Activated CD4-positive, alpha-beta T cell treated with anti-CD3 and anti-CD28 coated beads for 36 hours (primary cell): ENCODE measurements at regions of chr5 and their contacts with region 1.

Region 1: DNA sequence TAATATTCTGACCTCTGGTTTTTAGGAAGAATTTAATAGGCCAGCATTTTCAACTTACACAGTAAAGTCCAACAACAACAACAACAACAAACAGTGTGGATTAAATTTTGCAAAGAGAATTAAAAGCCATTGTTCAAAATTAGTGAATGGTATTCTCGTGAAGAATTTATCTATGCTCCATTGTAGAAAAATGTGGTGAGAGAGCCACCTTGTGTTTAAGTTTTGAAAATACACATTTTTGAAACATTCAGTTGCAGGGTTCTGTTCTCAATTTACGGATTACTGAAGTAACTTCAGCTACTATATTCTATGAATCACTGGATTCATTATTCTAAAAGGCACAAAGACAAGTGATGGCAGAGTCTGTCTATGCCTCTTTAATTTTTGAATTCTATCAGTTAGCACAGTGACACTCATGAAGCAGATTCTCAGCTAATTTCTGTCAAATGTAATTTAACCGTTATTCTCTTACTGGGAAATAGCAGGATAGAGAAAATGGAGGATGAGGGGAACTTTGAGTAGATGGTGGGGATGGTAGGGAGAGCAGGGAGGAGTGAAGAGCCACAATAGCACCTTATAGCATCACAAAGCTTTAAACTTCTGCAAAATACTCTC is 11.0 kb downstream of the CCDC152 start:
- DNase-seq: no peak
- ATAC-seq: no peak
- H3K4me3 Mint-ChIP-seq: no peak overlapping the region
- H3K27ac Mint-ChIP-seq: no peak overlapping the region
- H3K4me1 Mint-ChIP-seq: no peaks in the 10 kb centered on the region
- H3K27me3 Mint-ChIP-seq: peaks cover 3% of the 10 kb centered on the region

Region 2: DNA sequence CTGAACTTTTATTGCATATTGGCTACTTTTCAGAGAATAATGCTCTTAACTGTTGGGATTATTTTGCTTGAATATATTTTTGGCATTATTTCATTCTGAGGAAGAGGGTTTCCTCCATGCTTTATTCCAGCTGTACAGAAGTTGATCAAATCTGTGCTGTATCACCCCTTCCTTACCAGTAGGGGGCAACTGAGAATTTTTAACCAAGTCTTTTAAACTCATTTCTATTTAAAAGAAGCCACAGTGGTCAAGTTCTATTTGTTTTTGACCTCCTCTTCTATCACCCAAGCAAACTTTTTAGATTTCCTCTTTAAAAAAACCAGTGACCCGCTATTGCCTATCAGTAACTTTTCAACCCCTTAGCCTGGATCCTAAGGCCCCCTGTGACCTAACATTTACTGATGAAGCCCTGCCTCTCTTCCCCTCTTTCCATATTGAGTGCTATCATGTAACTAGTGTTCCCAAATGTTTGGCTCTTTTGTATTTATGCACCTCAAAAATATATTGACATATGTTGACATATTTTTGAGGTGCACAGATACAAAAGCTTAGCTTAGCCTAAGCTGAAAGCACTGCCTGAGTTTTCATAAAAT is 761.9 kb before region 1 on chr5:
- CTCF ChIA-PET with region 1: interaction called, 4 read pairs
- POLR2A ChIA-PET with region 1: no interaction called
- intact Hi-C with region 1: loop called in 1 of 2 experiments (anchors 2 kb)
- DNase-seq: no peak
- ATAC-seq: no peak
- H3K4me3 Mint-ChIP-seq: no peak overlapping the region
- H3K27ac Mint-ChIP-seq: no peak overlapping the region
- H3K4me1 Mint-ChIP-seq: no peaks in the 10 kb centered on the region
- H3K27me3 Mint-ChIP-seq: peaks cover 3% of the 10 kb centered on the region

Region 3: DNA sequence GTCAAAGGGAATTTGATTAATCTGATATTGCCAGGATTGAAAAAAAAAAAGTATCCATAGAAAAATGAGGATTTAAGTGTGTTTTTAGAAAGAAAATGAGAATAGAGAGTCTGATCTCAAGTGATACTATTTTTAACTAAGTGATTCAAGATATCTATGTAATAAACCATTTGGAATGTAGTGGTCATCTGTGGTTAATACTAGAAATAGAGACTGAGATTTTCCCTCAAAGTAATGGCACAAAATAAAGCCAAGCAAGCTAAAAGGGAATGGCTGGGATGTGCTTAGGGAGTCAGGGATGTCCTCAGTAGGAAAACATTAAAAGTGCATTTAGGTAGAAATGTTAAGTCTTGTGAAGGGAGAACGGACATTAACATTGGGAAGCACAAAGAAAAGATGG is 751.9 kb before region 1 on chr5:
- CTCF ChIA-PET with region 1: no interaction called
- POLR2A ChIA-PET with region 1: no interaction called
- intact Hi-C with region 1: no loop called
- DNase-seq: no peak
- ATAC-seq: no peak
- H3K4me3 Mint-ChIP-seq: no peak overlapping the region
- H3K27ac Mint-ChIP-seq: no peak overlapping the region
- H3K4me1 Mint-ChIP-seq: no peaks in the 10 kb centered on the region
- H3K27me3 Mint-ChIP-seq: peaks cover 10% of the 10 kb centered on the region

Region 4: GRCh38 chr5:42423285-42424165 is 344.1 kb before region 1 on chr5 and contains the start of gene GHR:
- CTCF ChIA-PET with region 1: interaction called, 3 read pairs
- POLR2A ChIA-PET with region 1: no interaction called
- intact Hi-C with region 1: loop called in 1 of 2 experiments (anchors 1 kb)
- DNase-seq: peak; percentile 54
- ATAC-seq: peak; percentile 73
- H3K4me3 Mint-ChIP-seq: no peak within 1 kb of the TSS
- H3K27ac Mint-ChIP-seq: no peak within 1 kb of the TSS
- H3K4me1 Mint-ChIP-seq: no peaks in the 10 kb centered on the region
- H3K27me3 Mint-ChIP-seq: peaks cover 24% of the 10 kb centered on the region
- total RNA-seq, gene GHR: not detected

Region 5: GRCh38 chr5:42514754-42515153 is 252.8 kb before region 1 on chr5:
- CTCF ChIA-PET with region 1: no interaction called
- POLR2A ChIA-PET with region 1: no interaction called
- intact Hi-C with region 1: loop called in 1 of 2 experiments (anchors 5 kb)
- DNase-seq: no peak
- ATAC-seq: no peak
- H3K4me3 Mint-ChIP-seq: no peak overlapping the region
- H3K27ac Mint-ChIP-seq: no peak overlapping the region
- H3K4me1 Mint-ChIP-seq: no peaks in the 10 kb centered on the region
- H3K27me3 Mint-ChIP-seq: peaks cover 2% of the 10 kb centered on the region

Region 6: DNA sequence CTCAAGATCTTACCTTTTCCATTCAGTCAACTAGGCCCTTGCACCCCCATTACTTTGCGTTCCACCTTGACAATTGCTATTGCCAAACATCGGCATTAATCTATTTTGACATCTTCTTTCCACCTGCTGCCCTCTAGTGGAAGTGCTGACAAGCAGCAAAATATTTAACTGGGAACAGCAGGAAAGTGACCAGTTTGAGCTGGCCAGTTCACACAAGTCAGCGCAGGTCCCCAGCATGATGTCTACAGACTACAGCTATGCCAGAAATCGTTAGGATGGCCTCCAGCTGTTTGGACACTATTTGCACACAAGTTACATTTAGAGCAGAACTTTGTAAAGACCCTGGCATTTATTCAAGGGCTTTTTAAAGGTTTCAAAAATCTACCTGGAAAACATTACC is 184.3 kb before region 1 on chr5:
- CTCF ChIA-PET with region 1: interaction called, 6 read pairs
- POLR2A ChIA-PET with region 1: no interaction called
- intact Hi-C with region 1: loop called in 1 of 2 experiments (anchors 5 kb)
- DNase-seq: peak; percentile 52
- ATAC-seq: no peak
- H3K4me3 Mint-ChIP-seq: no peak overlapping the region
- H3K27ac Mint-ChIP-seq: no peak overlapping the region
- H3K4me1 Mint-ChIP-seq: no peaks in the 10 kb centered on the region
- H3K27me3 Mint-ChIP-seq: peaks cover 10% of the 10 kb centered on the region

Region 7: DNA sequence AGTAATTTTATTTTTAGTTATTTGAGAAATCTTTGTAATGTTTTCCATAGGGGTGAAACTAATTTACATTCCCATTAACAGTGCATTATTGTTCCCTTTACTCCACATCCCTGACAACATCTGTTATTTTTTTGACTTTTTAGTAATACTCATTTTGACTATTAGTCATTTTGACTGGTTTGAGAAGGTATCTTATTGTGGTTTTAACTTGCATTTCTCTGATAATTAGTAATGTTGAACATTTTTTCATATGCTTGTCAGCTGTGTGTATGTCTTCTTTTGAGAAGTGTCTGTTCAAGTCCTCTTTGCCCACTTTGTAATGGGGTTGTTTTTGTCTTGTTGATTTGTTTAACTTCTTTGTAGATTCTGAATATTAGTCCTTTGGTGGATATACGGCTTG is 16.5 kb after region 1 on chr5:
- CTCF ChIA-PET with region 1: no interaction called
- POLR2A ChIA-PET with region 1: no interaction called
- intact Hi-C with region 1: no loop called
- DNase-seq: no peak
- ATAC-seq: no peak
- H3K4me3 Mint-ChIP-seq: no peak overlapping the region
- H3K27ac Mint-ChIP-seq: no peak overlapping the region
- H3K4me1 Mint-ChIP-seq: no peaks in the 10 kb centered on the region
- H3K27me3 Mint-ChIP-seq: no peaks in the 10 kb centered on the region

Region 8: GRCh38 chr5:42889311-42889933 is 121.8 kb after region 1 on chr5:
- CTCF ChIA-PET with region 1: interaction called, 6 read pairs
- POLR2A ChIA-PET with region 1: no interaction called
- intact Hi-C with region 1: loop called (anchors 5 to 10 kb)
- DNase-seq: peak; percentile 82
- ATAC-seq: peak; percentile 84
- H3K4me3 Mint-ChIP-seq: no peak overlapping the region
- H3K27ac Mint-ChIP-seq: no peak overlapping the region
- H3K4me1 Mint-ChIP-seq: no peaks in the 10 kb centered on the region
- H3K27me3 Mint-ChIP-seq: peaks cover 3% of the 10 kb centered on the region